IMR-90 (cell line): ENCODE measurements at regions of chr11 and their contacts with region 1.

Region 1: GRCh38 chr11:5967708-5968107 is 586 bp downstream of the OR56A5 start:
- DNase-seq: no peak
- ATAC-seq: no peak
- H3K4me3 ChIP-seq: no peak overlapping the region
- H3K27ac ChIP-seq: no peak overlapping the region
- H3K4me1 ChIP-seq: no peaks in the 10 kb centered on the region
- H3K27me3 ChIP-seq: no peaks in the 10 kb centered on the region
- CTCF ChIP-seq: no peak
- POLR2A ChIP-seq: no peak
- RAD21 ChIP-seq: no peak

Region 2: DNA sequence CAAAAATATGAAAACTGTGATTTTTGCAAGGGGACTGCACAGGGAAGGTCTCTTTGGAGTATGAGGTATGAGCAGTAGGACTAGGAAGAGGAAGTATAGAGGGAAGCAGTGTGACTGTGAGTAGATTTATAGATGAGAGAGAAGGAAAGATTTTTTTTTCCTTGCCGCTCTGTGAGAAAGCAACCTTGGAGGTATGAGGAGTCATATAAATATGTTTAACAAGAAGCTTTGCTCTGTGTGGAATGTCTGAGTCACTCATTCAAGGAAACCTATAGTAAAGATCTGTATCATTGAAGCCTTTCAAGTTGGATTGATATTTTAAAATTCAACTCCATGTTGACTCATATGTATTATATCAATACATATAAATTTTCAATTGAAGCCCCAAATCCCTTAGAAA is 555.5 kb after region 1 on chr11:
- CTCF ChIA-PET with region 1: no interaction called
- POLR2A ChIA-PET with region 1: no interaction called
- dilution Hi-C with region 1: no loop called
- in situ Hi-C with region 1: no loop called
- intact Hi-C with region 1: loop called (anchors 5 kb)
- DNase-seq: peak; percentile 81
- ATAC-seq: peak; percentile 88
- H3K4me3 ChIP-seq: no peak overlapping the region
- H3K27ac ChIP-seq: no peak overlapping the region
- H3K4me1 ChIP-seq: 0 out of 2 replicates have a peak, but pooled peaks cover 2% of the 10 kb centered on the region
- H3K27me3 ChIP-seq: no peaks in the 10 kb centered on the region
- CTCF ChIP-seq: no peak
- POLR2A ChIP-seq: no peak
- RAD21 ChIP-seq: no peak

Region 3: GRCh38 chr11:6727971-6728760 is 760.5 kb after region 1 on chr11:
- CTCF ChIA-PET with region 1: no interaction called
- POLR2A ChIA-PET with region 1: no interaction called
- dilution Hi-C with region 1: no loop called
- in situ Hi-C with region 1: no loop called
- intact Hi-C with region 1: loop called (anchors 10 kb)
- DNase-seq: no peak
- ATAC-seq: no peak
- H3K4me3 ChIP-seq: no peak overlapping the region
- H3K27ac ChIP-seq: no peak overlapping the region
- H3K4me1 ChIP-seq: no peaks in the 10 kb centered on the region
- H3K27me3 ChIP-seq: no peaks in the 10 kb centered on the region; the same call in 1 of the 2 replicates
- CTCF ChIP-seq: no peak
- POLR2A ChIP-seq: no peak
- RAD21 ChIP-seq: no peak